Ovary (tissue), 10 donors: ENCODE measurements at regions of chr1 and their contacts with region 1.

Region 1: DNA sequence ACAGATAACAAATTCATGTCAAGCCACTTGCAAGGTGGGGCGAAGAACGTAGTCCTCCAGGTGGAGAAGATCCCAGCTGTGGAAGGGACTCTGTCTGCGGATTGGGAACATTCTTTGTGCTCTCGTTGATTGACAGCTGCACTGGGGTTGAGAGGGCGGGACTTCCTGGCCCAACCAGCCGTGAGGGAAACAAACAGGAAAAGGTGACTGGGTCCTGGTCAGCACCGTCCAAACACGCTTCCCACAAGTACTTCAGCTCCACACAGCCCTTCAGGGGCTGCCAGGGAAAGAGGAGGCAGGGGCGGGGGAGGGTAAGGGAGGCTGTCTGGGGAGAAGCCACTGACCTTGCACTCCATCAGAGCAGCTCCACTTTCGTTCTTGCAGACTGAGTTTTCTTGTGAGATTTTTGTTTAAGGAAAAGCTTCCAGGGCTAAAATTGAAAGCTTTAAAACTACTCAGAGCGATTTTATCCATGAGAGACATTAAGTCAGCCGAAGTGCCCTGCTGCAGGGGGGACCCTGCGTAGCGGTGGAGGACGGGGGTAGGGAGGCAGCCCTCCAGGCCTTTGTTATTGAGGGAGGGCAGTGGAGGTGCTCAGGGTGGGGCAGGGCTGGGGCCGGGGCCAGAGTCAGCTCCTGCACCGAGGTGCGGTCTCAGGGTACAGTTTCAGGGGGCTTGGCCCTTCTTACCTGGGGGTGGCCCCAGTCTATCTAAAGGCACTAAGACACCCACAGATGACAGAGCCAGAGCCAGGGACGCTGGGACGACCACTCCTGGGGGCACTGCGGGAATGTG is 21.6 kb upstream of the STUM start:
- DNase-seq: peak; percentile 73 to 83 (median 77)
- H3K4me3 ChIP-seq: peak overlapping the region; percentile 26
- H3K27ac ChIP-seq: peak overlapping the region; percentile 7 to 44
- H3K4me1 ChIP-seq: no peaks in the 10 kb centered on the region
- H3K27me3 ChIP-seq: no peaks in the 10 kb centered on the region
- CTCF ChIP-seq: no peak
- EP300 ChIP-seq: no peak
- POLR2A ChIP-seq: no peak

Region 2: DNA sequence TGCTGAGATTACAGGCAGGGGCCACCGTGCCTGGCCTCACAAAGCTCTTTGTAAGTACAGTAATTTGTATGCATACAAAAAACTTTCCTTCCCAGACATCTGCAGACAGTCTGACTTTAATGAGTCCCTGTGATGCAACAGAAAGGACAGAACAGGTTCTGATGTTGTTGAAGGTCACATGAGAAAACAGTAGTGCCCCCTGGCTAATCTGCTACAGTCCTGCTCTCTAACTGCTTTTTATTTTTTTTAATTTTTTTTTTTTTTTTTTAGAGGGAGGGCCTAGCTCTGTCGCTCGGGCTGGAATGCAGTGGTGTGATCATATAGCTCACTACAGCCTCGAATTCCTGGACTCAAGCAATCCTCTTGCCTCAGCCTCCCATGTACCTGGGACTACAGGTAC is 377.2 kb before region 1 on chr1:
- intact Hi-C with region 1: loop called in 1 of 4 experiments (anchors 10 kb)
- DNase-seq: no peak
- H3K4me3 ChIP-seq: no peak overlapping the region
- H3K27ac ChIP-seq: no peak overlapping the region
- H3K4me1 ChIP-seq: no peaks in the 10 kb centered on the region
- H3K27me3 ChIP-seq: no peaks in the 10 kb centered on the region
- CTCF ChIP-seq: no peak
- EP300 ChIP-seq: no peak
- POLR2A ChIP-seq: no peak